ENCODE measurements at regions of chr10 and their contacts with region 1.

Region 1: DNA sequence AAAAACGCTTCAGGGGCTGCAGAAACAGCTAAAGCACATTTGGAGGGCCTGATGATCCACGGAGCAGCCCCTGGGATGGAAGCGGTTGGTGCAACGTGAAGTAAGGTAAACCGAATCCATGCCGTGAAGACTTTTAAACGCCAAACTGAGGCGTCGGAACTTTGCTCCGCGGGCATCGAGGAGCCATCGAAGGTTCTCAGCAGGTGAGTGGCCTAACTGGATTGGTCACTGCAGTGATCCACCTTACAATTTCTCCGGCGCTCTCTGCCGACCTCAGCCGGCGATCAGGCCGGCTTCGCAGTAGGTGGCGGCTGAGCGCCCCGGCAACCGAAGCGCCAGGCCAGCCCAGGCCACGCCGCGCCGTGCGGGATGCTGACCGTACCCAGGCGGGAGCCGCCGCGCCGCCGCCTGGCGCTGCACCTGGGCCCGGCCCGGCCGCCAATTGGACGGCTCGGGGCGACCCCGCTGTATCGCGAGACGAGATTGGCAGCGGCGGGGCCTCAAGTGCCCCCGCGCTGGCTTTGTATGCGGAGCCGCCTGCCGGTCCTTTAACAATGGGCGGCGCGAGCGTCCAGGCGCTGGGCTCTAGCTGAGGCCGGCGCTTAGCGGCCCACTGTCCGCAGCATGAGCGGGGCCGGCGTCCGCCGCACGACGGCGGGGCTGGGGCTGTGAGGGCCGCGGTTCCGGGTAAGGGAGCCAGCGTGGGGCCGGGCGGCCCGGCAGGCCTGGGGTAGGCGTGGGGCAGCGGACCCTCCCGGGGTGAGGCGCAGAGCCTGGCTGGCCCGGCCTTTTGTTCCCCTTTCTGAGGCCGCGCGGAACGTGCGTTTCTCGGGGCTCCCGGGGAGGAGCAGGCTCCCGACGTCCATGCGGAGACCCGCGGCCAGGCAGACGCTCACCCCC is at the start of gene CCNJ:
- DNase-seq: peak; percentile 76 to 87 (median 83)
- ATAC-seq: peak; percentile 91
- H3K4me3 ChIP-seq: peak within 1 kb of the TSS; percentile 78
- H3K4me3 Mint-ChIP-seq: peak within 1 kb of the TSS; percentile 83 to 96 (median 92)
- H3K27ac ChIP-seq: peak within 1 kb of the TSS; percentile 81
- H3K27ac Mint-ChIP-seq: peak within 1 kb of the TSS; percentile 80 to 96 (median 87)
- H3K4me1 ChIP-seq: peaks cover 13 to 16% of the 10 kb centered on the region in 2 donors
- H3K4me1 Mint-ChIP-seq: peaks cover 32 to 50% (median 44%) of the 10 kb centered on the region in 7 donors
- H3K27me3 ChIP-seq: peaks cover 3 to 4% of the 10 kb centered on the region in 2 donors
- H3K27me3 Mint-ChIP-seq: peaks cover 4 to 11% (median 8%) of the 10 kb centered on the region in 5 donors
- total RNA-seq, gene CCNJ: 5.6 to 8.0 (median 6.7) TPM

Region 2: GRCh38 chr10:95656291-95657164 is 386.8 kb before region 1 on chr10 and contains the start of gene ALDH18A1:
- CTCF ChIA-PET with region 1: no interaction called
- POLR2A ChIA-PET with region 1: no interaction called
- intact Hi-C with region 1: loop called in 1 of 2 experiments (anchors 10 kb)
- DNase-seq: peak; percentile 78 to 95 (median 88)
- ATAC-seq: peak; percentile 95
- H3K4me3 ChIP-seq: peak within 1 kb of the TSS; percentile 78
- H3K4me3 Mint-ChIP-seq: peak within 1 kb of the TSS; percentile 98 to 100 (median 99)
- H3K27ac ChIP-seq: peak within 1 kb of the TSS; percentile 72
- H3K27ac Mint-ChIP-seq: peak within 1 kb of the TSS; percentile 82 to 97 (median 93)
- H3K4me1 ChIP-seq: peaks cover 7 to 13% of the 10 kb centered on the region in 2 donors
- H3K4me1 Mint-ChIP-seq: peaks cover 7 to 40% (median 27%) of the 10 kb centered on the region in 7 donors
- H3K27me3 ChIP-seq: no peaks in the 10 kb centered on the region
- H3K27me3 Mint-ChIP-seq: peaks cover 0 to 3% (median 0%) of the 10 kb centered on the region in 5 donors
- total RNA-seq, gene ALDH18A1: 15.0 to 73.8 (median 26.0) TPM

Region 3: GRCh38 chr10:96089670-96090462 is 46.6 kb after region 1 on chr10:
- CTCF ChIA-PET with region 1: interaction called, 5 read pairs
- POLR2A ChIA-PET with region 1: interaction called, 19 read pairs
- intact Hi-C with region 1: loop called (anchors 1 kb)
- DNase-seq: peak; percentile 87 to 94 (median 92)
- ATAC-seq: peak; percentile 94
- H3K4me3 ChIP-seq: peak overlapping the region; percentile 99
- H3K4me3 Mint-ChIP-seq: peak overlapping the region; percentile 87 to 98 (median 94)
- H3K27ac ChIP-seq: peak overlapping the region; percentile 93
- H3K27ac Mint-ChIP-seq: peak overlapping the region; percentile 96 to 99 (median 99)
- H3K4me1 ChIP-seq: peaks cover 4 to 8% of the 10 kb centered on the region in 2 donors
- H3K4me1 Mint-ChIP-seq: peaks cover 0 to 15% (median 14%) of the 10 kb centered on the region in 7 donors
- H3K27me3 ChIP-seq: peaks cover 3 to 4% of the 10 kb centered on the region in 2 donors
- H3K27me3 Mint-ChIP-seq: peaks cover 29 to 36% (median 30%) of the 10 kb centered on the region in 5 donors

Region 4: GRCh38 chr10:96292971-96293920 is 250.0 kb after region 1 on chr10:
- CTCF ChIA-PET with region 1: no interaction called
- POLR2A ChIA-PET with region 1: interaction called, 4 read pairs
- intact Hi-C with region 1: loop called in 1 of 2 experiments (anchors 10 kb)
- DNase-seq: peak in 6 of 9 donors; percentile 11 to 54 (median 44)
- ATAC-seq: peak; percentile 70
- H3K4me3 ChIP-seq: no peak overlapping the region
- H3K4me3 Mint-ChIP-seq: peak overlapping the region in 1 of 10 donors; percentile 2
- H3K27ac ChIP-seq: no peak overlapping the region
- H3K27ac Mint-ChIP-seq: peak overlapping the region in 5 of 9 donors; percentile 9 to 89 (median 42)
- H3K4me1 ChIP-seq: peaks cover 0 to 25% of the 10 kb centered on the region in 2 donors
- H3K4me1 Mint-ChIP-seq: peaks cover 8 to 54% (median 43%) of the 10 kb centered on the region in 7 donors
- H3K27me3 ChIP-seq: no peaks in the 10 kb centered on the region
- H3K27me3 Mint-ChIP-seq: peaks cover 0 to 3% (median 0%) of the 10 kb centered on the region in 5 donors

Region 5: DNA sequence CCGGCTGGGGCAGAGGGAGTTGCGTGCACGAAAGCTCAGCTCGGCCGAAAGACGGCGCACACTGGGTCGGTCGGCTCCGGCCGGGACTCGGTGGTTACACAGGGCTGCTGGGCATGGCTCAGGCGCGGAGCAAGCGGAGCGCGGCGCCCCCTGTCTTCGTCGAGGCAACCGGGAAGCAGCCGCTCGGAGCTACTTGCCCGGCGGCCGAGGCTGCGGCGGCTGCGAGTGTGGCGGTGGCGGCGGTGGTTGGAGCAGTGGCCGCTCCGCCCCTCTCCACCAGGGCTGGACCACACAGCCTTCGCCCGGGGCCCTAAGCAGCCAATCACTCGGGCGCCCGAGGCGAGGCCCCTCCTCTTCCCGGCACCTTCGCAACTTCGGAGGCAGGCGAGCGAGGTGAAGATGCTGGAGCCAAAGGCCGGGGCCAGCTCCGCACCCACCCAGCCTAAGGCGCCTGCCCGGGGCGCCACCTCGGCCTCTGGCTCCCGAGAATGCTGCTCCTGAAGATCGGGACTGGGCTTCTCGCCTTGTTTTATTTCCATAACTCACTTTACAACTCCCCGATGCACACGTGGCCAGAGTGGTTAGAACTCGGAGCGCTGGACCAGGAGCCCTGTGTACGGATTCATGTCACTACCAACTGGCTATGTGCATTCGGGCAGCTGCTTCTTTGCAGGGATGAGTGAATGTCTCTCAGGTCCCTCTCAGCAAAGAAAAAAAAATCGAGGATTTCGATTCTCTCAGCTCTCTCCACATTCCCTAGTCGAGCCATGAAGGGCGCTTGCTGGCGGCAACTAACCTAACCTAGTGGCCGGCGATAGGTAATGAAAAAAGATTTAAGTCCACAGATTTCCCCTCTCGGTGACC is 470.6 kb after region 1 on chr10 and contains the start of gene TLL2:
- CTCF ChIA-PET with region 1: no interaction called
- POLR2A ChIA-PET with region 1: no interaction called
- intact Hi-C with region 1: loop called in 1 of 2 experiments (anchors 10 kb)
- DNase-seq: peak; percentile 1 to 74 (median 33)
- ATAC-seq: peak; percentile 83
- H3K4me3 ChIP-seq: peak within 1 kb of the TSS; percentile 48
- H3K4me3 Mint-ChIP-seq: peak within 1 kb of the TSS; percentile 75 to 86 (median 80)
- H3K27ac ChIP-seq: no peak within 1 kb of the TSS
- H3K27ac Mint-ChIP-seq: peak within 1 kb of the TSS in 1 of 9 donors; percentile 37
- H3K4me1 ChIP-seq: peaks cover 0 to 9% of the 10 kb centered on the region in 2 donors
- H3K4me1 Mint-ChIP-seq: peaks cover 8 to 24% (median 18%) of the 10 kb centered on the region in 7 donors
- H3K27me3 ChIP-seq: peaks cover 0 to 6% of the 10 kb centered on the region in 2 donors
- H3K27me3 Mint-ChIP-seq: peaks cover 29 to 61% (median 36%) of the 10 kb centered on the region in 5 donors
- total RNA-seq, gene TLL2: 0.24 TPM in 1 of 5 experiments, not detected in the others